OCI-LY7 (cell line): ENCODE measurements at regions of chr1 and their contacts with region 1.

Region 1: DNA sequence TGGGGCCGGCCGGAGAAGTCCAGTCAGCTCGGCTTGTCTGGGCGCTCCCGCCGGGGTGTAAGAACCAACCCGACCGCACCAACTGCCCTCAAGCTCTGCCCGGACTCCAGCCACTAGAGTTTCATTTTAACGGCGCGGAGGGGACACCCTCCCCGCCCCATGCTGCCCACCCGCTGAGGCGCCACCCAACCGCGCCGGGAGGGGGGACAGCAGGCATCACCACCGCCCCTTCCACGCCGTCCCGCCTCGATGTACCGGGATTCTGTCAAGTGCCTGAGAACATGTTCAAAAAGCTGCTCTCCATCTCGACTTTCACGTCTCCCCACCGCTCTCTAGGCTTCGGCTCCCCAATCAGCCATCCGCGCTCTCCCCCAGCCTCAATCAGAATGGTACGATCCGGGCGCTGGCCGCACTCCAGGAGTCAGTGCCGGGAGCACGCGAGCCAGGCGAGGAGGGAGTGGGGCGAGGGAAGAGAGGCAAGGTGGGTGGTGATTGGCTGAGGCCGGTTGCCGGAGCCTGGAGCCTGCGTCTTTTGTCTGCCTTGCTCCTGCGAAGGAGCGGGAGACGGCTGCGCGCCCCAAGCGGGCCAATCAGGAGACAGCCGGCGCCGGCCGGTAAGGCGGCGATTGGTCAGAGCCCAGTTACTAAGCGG is at the start of gene PIK3R3:
- DNase-seq: peak; percentile 98
- H3K4me3 ChIP-seq: peak within 1 kb of the TSS; percentile 95
- H3K27ac ChIP-seq: peak within 1 kb of the TSS; percentile 73
- H3K4me1 ChIP-seq: peaks cover 26% of the 10 kb centered on the region
- CTCF ChIP-seq: no peak
- total RNA-seq, gene PIK3R3: 12.7 and 16.2 TPM in 2 replicates

Region 2: DNA sequence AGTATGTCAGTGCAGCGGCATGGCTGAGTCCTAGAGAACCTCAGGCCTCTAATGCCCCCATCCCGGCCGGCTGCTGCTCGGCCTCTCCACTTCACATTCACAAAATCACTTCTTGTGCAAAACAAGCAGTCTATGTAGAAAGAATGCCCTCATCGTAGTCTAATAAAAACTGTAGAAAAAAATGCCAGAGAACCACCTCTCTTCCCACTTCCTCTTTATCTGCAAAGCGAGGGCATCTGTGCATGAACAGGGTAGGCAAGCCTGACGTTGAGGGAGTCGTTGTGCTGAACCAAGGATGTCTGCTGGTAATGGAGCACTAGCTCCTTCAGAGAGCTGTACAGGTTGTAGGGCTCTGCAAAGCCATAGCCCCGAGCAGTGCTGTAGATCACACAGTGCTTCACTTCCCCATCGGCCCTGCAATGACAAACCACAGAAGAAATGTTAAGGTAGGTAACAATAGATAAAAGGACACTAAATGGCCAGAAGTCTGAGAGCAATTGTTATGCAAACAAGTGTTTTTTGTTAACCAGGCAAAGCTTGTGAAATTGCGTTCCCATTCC is 89.1 kb before region 1 on chr1:
- CTCF ChIA-PET with region 1: no interaction called
- POLR2A ChIA-PET with region 1: interaction called, 8 read pairs
- intact Hi-C with region 1: loop called (anchors 1 kb)
- DNase-seq: peak; percentile 98
- H3K4me3 ChIP-seq: peak overlapping the region; percentile 50
- H3K27ac ChIP-seq: peak overlapping the region; percentile 100
- H3K4me1 ChIP-seq: peaks cover 86% of the 10 kb centered on the region
- CTCF ChIP-seq: no peak

Region 3: GRCh38 chr1:46166521-46167462 is 34.1 kb after region 1 on chr1:
- CTCF ChIA-PET with region 1: interaction called, 3 read pairs
- POLR2A ChIA-PET with region 1: interaction called, 7 read pairs
- intact Hi-C with region 1: loop called (anchors 2 kb)
- DNase-seq: peak; percentile 75
- H3K4me3 ChIP-seq: peak overlapping the region; percentile 1
- H3K27ac ChIP-seq: peak overlapping the region; percentile 42
- H3K4me1 ChIP-seq: peaks cover 31% of the 10 kb centered on the region
- CTCF ChIP-seq: no peak

Region 4: DNA sequence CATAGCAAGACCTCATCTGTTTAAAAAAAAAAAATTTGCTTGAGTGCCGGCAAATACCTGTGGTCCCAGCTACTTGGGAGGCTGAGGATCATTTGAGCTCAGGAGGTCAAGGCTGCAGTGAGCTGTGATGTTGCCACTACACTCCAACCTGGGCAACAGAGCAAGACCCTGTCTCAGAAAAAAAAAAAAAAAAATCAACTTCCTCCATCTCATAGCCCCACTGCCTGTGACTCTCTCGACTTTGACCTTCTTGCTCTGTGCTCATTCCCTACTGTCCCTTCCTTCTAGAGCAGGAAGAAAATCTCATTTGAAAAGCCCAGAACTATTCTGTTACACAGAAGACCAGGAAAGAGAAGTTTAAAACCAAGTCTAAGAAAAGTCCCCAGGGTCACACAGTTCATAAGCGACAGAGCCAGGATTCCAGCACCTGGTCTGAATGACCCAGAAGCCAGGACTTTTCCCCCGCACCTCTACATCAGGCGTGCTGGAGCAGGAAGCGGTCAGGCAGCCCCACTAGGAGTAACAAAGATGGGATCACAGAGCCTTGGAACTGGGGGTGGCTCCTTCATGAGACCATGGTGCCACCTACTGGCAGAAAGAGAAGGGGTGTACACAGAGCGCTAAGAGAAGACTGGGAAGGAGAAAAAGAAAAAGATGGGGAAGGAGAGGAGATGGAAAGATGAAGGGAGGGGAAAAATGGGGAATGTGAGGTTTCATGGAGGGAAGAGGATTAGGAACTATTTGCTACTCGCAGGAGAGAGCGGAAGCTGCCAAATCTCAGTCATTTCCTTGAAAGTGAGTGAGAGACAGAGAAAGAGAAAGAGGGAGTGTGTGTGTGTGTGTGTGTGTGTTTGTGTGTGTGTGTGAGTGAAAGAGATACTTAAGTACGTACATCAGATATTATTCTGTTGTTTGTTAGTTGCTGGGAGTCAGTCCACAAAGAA is 46.8 kb after region 1 on chr1:
- CTCF ChIA-PET with region 1: no interaction called
- POLR2A ChIA-PET with region 1: no interaction called
- intact Hi-C with region 1: loop called (anchors 1 kb)
- DNase-seq: peak; percentile 84
- H3K4me3 ChIP-seq: no peak overlapping the region
- H3K27ac ChIP-seq: no peak overlapping the region
- H3K4me1 ChIP-seq: peaks cover 51% of the 10 kb centered on the region
- CTCF ChIP-seq: peak; percentile 100

Region 5: DNA sequence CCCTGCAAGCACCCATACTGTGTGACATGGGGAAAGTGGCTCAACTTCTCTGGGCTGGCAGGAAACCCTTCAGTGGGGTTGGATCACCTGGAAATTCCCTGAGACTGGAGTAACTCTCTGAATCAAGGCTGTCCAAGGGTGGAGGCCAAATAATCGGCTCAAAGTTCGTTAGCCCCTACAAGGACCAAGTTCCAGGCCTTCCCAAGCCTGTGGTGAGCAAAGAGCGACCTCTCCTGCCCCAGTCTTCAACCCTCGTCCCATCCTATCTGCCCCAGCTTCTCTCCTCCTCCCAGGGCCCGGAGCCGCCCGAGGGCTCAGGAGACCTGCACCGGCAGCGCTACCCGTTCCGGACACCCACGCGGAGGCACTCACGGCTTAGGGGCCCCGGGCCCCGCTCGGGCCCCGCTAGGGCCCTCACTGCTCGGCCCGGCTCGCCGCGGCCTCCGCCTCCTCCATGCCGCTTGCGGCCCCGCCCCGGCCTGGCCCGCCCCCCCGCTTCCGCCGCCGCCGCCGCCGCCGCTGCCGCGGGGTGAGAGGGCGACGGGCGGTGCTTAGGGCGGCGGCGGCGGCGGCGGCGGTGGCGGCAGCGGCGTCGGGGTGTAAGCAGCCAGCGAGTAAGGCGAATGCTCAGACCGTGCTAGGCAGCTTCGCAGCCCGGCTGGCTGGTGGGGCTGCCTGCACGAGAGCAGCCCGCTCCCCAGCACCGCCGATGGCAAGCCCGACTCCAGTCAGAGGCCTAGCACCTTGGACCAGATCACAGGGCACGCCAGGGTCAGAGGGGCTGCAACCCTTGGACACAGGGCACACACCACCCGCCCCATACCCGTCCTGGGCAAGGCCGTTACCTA is 65.5 kb after region 1 on chr1 and contains the start of gene POMGNT1:
- CTCF ChIA-PET with region 1: no interaction called
- POLR2A ChIA-PET with region 1: no interaction called
- intact Hi-C with region 1: loop called (anchors 2 kb)
- DNase-seq: peak; percentile 76
- H3K4me3 ChIP-seq: peak within 1 kb of the TSS; percentile 70
- H3K27ac ChIP-seq: peak within 1 kb of the TSS; percentile 57
- H3K4me1 ChIP-seq: peaks cover 25% of the 10 kb centered on the region
- CTCF ChIP-seq: peak; percentile 69
- total RNA-seq, gene POMGNT1: 26.8 and 37.3 TPM in 2 replicates